Endothelial cell of umbilical vein (primary cell): ENCODE measurements at regions of chr3 and their contacts with region 1.

Region 1: GRCh38 chr3:14791343-14791945 is 27.3 kb upstream of the FGD5 start:
- DNase-seq: peak; percentile 71
- H3K4me3 ChIP-seq: no peak overlapping the region
- H3K27ac ChIP-seq: no peak overlapping the region
- H3K4me1 ChIP-seq: no peaks in the 10 kb centered on the region
- H3K27me3 ChIP-seq: no peaks in the 10 kb centered on the region
- CTCF ChIP-seq: peak; percentile 88 to 93
- POLR2A ChIP-seq: no peak

Region 2: DNA sequence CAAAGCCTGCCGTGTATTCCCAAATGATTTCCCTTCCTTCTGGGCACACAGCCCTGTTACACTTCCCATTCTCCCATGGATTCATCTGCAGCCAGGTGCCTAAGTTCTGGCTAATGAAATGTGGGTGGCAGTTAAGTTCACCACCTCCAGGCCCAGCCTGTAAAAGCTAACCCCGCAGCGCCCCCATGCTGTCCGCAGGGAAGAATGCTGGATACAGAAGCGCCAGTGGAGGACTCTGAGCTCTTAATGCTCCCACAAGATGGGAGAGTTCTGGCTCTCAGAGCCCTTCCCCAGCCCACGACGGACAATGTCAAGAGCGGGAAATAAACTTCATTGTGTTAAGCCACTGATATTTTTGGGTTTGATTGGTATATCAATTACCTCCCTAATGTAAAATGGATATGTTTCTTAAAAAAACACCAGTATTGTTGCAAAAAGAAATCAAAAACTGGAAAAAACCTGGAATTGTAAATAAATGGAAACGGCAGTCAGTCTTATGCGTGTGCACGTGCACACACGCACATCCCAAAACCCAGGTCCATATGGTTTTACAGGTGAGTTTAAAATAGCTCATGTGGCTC is 10.4 kb before region 1 on chr3:
- CTCF ChIA-PET with region 1: interaction called, 18 read pairs
- POLR2A ChIA-PET with region 1: no interaction called
- dilution Hi-C with region 1: no loop called
- intact Hi-C with region 1: no loop called
- DNase-seq: peak; percentile 62
- H3K4me3 ChIP-seq: no peak overlapping the region
- H3K27ac ChIP-seq: no peak overlapping the region
- H3K4me1 ChIP-seq: no peaks in the 10 kb centered on the region
- H3K27me3 ChIP-seq: peaks cover 6 to 14% of the 10 kb centered on the region in 2 experiments
- CTCF ChIP-seq: peak; percentile 63 to 74
- POLR2A ChIP-seq: no peak

Region 3: GRCh38 chr3:14810070-14810784 is 18.8 kb after region 1 on chr3:
- CTCF ChIA-PET with region 1: interaction called, 10 read pairs
- POLR2A ChIA-PET with region 1: no interaction called
- dilution Hi-C with region 1: no loop called
- intact Hi-C with region 1: loop called (anchors 1 kb)
- DNase-seq: peak; percentile 81
- H3K4me3 ChIP-seq: peak overlapping the region; percentile 36 to 87 (median 77)
- H3K27ac ChIP-seq: peak overlapping the region; percentile 61
- H3K4me1 ChIP-seq: peaks cover 50% of the 10 kb centered on the region
- H3K27me3 ChIP-seq: no peaks in the 10 kb centered on the region
- CTCF ChIP-seq: no peak
- POLR2A ChIP-seq: no peak

Region 4: GRCh38 chr3:14847613-14848541 is 56.4 kb after region 1 on chr3:
- CTCF ChIA-PET with region 1: interaction called, 26 read pairs
- POLR2A ChIA-PET with region 1: no interaction called
- dilution Hi-C with region 1: loop called (anchors 10 kb)
- intact Hi-C with region 1: no loop called
- DNase-seq: peak; percentile 43
- H3K4me3 ChIP-seq: no peak overlapping the region
- H3K27ac ChIP-seq: peak overlapping the region; percentile 10
- H3K4me1 ChIP-seq: peaks cover 23% of the 10 kb centered on the region
- H3K27me3 ChIP-seq: no peaks in the 10 kb centered on the region
- CTCF ChIP-seq: no peak
- POLR2A ChIP-seq: no peak

Region 5: DNA sequence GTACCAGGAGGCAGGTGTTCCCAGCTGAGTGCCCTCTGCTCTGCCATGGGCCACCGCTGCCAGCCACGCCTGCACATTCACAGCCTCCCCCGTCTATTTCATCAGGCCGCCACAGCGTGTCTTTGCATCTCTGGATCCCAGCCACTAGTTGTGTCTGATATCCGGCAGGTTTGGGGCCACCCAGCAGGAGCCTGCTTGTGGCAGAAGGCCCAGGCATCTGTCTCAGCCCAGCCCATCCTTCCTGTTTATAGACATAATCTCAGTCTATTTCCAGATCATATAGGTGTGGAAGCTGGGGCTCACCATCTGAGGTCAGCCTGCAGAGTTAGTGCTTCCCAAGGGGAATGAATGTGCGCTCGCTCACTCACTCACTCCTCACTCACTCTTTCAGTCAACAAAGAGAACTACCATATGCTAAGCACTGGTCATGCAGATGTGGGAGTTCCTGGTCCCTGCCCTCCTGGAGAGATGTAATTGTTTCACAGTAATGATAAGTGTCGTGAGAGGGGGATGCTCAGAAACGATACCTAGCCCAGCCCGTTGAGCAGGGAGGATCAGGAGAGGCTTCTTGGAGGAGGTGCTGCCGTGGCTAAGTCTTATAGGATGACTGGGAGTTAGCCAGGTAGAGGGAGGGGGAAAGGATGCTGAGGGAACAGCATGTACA is 87.9 kb after region 1 on chr3:
- CTCF ChIA-PET with region 1: interaction called, 8 read pairs
- POLR2A ChIA-PET with region 1: no interaction called
- dilution Hi-C with region 1: no loop called
- intact Hi-C with region 1: loop called (anchors 5 kb)
- DNase-seq: no peak
- H3K4me3 ChIP-seq: no peak overlapping the region
- H3K27ac ChIP-seq: no peak overlapping the region
- H3K4me1 ChIP-seq: peaks cover 13% of the 10 kb centered on the region
- H3K27me3 ChIP-seq: no peaks in the 10 kb centered on the region
- CTCF ChIP-seq: no peak
- POLR2A ChIP-seq: no peak

Region 6: DNA sequence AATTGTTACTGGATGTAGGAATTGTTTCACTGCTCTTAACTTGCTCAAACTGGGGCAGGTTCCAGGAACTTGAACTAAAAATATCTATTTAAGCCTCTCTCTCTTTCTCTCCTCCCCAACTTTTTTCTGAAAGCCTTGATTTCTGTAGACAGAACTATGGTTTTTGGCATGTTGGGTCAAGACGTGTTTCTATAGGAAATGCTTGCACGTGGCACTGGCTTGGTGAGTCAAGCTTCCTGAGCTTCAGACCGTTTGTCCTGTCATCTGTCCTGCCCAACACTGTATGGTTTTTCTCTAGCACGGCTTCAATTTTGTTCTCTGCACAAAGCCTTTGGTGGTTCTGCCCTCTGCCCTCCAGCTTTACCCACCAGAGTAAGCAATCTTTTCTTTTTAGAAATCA is 649.4 kb after region 1 on chr3:
- CTCF ChIA-PET with region 1: no interaction called
- POLR2A ChIA-PET with region 1: no interaction called
- dilution Hi-C with region 1: no loop called
- intact Hi-C with region 1: no loop called
- DNase-seq: peak; percentile 67
- H3K4me3 ChIP-seq: no peak overlapping the region
- H3K27ac ChIP-seq: peak overlapping the region; percentile 57
- H3K4me1 ChIP-seq: peaks cover 22% of the 10 kb centered on the region
- H3K27me3 ChIP-seq: no peaks in the 10 kb centered on the region
- CTCF ChIP-seq: no peak
- POLR2A ChIP-seq: no peak